Ovary (tissue), 10 donors: ENCODE measurements at regions of chr16 and their contacts with region 1.

Region 1: GRCh38 chr16:11255737-11256660 is at the start of gene SOCS1:
- DNase-seq: peak; percentile 85 to 93 (median 89)
- H3K4me3 ChIP-seq: peak within 1 kb of the TSS; percentile 87
- H3K27ac ChIP-seq: peak within 1 kb of the TSS; percentile 82 to 99
- H3K4me1 ChIP-seq: peaks cover 6% of the 10 kb centered on the region
- H3K27me3 ChIP-seq: no peaks in the 10 kb centered on the region
- CTCF ChIP-seq: peak; percentile 85 to 98 (median 98)
- EP300 ChIP-seq: no peak
- POLR2A ChIP-seq: peak; percentile 94
- total RNA-seq, gene SOCS1: 6.3 to 42.7 (median 9.4) TPM

Region 2: GRCh38 chr16:11181899-11182279 is 74.1 kb before region 1 on chr16:
- intact Hi-C with region 1: no loop called
- DNase-seq: no peak
- H3K4me3 ChIP-seq: no peak overlapping the region
- H3K27ac ChIP-seq: no peak overlapping the region
- H3K4me1 ChIP-seq: peaks cover 2% of the 10 kb centered on the region
- H3K27me3 ChIP-seq: no peaks in the 10 kb centered on the region
- CTCF ChIP-seq: no peak
- EP300 ChIP-seq: no peak
- POLR2A ChIP-seq: no peak

Region 3: DNA sequence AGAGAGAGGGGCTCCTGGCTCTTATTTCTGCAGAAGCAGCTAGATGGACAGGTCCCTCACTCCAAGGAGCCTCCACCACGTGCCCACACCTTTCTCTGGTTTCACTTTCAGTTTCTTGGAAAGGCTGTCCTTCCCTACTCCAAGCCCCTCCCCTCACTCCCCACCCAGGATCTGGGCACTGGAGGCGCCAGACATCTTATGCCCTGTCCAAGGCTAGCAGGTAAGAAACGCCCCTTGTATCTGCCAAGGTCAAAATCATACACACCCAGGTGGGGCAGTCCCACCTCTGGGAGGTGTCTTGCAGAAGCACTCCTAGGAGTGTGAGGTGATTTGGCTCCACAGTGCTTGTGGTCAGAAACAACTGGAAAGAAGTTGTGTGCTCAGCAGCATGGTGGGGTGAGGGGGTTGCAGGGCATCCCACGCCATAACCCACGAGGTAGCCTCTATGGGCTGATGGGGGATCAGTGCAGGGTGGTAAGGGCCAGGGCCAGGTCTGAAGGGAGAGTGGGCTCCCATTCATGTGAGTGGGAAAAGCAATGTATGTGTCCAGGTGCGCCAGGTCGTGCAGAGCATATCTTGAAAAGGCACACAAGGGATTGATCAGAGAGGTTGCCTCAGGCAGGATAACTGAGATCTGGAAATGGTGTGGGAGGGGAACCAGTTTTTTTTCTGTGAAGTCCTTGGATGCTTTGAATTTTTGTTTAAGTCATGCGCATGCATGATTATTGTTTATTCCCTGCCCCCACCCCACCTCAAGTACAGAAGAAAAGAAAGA is 56.9 kb after region 1 on chr16:
- intact Hi-C with region 1: loop called in 1 of 4 experiments (anchors 5 kb)
- DNase-seq: peak; percentile 61 to 66 (median 65)
- H3K4me3 ChIP-seq: no peak overlapping the region
- H3K27ac ChIP-seq: peak overlapping the region in 1 of 2 donors; percentile 46
- H3K4me1 ChIP-seq: peaks cover 22% of the 10 kb centered on the region
- H3K27me3 ChIP-seq: no peaks in the 10 kb centered on the region
- CTCF ChIP-seq: no peak
- EP300 ChIP-seq: no peak
- POLR2A ChIP-seq: no peak

Region 4: DNA sequence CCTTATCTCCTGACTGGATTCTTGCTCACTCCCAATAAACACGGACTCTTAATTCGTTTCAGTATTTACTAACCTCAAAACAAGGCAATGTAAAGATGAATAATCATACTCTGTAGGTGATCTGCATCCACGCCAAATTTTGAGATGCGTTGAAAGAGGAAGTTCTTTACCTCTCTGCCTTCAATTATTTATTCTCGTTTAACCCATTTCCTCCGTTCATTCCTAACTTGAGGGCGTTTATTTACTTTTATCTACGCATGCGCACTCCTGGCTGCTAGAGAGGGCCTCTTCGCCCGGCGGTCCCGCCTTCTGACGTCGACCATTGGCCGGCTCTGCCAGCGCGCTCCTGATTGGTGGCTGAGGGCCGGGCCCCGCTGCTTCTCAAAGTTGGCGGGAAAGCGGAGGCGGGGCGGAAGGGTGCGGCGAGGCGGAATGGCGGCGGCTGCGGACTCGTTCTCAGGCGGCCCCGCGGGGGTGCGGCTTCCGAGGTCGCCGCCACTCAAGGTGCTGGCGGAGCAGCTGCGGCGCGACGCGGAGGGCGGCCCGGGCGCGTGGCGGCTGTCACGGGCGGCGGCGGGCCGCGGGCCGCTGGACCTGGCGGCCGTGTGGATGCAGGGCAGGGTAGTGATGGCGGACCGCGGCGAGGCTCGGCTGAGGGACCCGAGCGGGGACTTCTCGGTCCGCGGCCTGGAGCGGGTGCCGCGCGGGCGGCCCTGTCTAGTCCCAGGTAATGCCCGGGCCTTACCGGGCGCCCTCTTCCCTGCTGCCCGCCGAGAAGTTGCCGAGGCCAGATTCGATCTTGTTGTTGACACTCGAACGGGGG is 89.3 kb after region 1 on chr16 and contains the start of gene RMI2:
- intact Hi-C with region 1: loop called in 2 of 4 experiments (anchors 10 kb)
- DNase-seq: peak; percentile 95 to 97 (median 97)
- H3K4me3 ChIP-seq: peak within 1 kb of the TSS; percentile 39
- H3K27ac ChIP-seq: no peak within 1 kb of the TSS
- H3K4me1 ChIP-seq: peaks cover 15% of the 10 kb centered on the region
- H3K27me3 ChIP-seq: no peaks in the 10 kb centered on the region
- CTCF ChIP-seq: no peak
- EP300 ChIP-seq: no peak
- POLR2A ChIP-seq: no peak
- total RNA-seq, gene RMI2: 1.6 to 6.5 (median 2.9) TPM